Activated CD4-positive, alpha-beta T cell treated with anti-CD3 and anti-CD28 coated beads, Interleukin-2, amount 10 ng/mL, durations not matched to agents 24 days and 14 days (primary cell): ENCODE measurements at regions of chr18 and their contacts with region 1.

Region 1: DNA sequence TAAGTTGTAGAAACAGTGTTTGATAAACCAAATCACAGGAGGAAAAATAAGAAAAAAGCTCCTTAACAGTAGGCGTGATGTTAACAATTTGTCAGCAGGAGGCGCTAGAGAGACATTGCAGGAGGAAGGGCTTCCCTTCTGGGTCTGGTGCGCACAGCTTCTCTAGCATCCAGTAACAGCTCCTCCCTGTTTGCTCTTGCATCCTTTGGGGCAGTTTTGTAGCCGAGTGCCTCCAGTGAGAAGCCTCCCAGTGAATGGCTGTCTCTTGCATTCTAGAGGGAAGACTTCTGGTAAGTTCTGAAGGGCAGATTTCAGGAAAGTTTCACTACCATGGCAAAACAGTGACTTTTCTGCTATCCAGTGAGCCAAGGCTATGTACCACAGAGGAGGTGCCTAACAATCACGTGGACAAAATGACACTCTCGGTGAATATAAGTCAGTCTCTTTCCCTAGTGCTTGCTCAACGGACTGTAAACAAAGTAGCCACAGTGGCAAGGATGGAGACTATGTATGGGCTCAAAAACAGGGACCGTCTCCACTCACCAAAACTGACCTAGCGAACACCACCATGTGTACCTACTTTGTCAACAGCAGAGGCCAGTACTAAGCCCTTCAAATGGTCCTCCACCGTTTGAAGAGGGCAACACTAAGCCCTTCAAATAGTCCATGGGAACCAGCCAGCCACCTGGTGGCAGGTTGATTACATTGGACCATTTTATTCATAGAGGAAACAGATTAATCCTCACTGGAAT is 9.6 kb upstream of the ZNF396 start:
- DNase-seq: peak; percentile 89
- H3K4me3 Mint-ChIP-seq: no peak overlapping the region
- H3K27ac Mint-ChIP-seq: no peak overlapping the region
- H3K4me1 Mint-ChIP-seq: peaks cover 5% of the 10 kb centered on the region
- H3K27me3 Mint-ChIP-seq: peaks cover 33% of the 10 kb centered on the region

Region 2: DNA sequence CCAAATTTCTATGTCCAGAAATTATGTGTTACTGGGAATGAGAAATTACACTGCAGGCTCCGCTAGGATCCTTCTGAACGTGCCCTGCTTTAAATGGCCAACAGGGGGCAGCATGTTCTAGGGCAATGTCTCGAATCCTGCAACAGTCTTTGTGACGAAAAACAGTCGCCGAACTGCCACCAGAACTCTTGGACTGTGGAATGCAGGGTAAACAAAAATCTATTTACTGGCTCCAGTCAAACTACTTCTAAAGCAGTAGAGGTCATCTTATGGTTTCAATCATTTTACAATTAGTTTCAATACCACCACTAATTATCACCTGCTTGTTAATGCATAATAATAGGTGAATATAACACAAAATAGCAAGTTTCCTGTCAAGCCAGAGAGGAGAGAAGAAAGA is 155.7 kb before region 1 on chr18:
- intact Hi-C with region 1: loop called (anchors 1 kb)
- DNase-seq: peak; percentile 93
- H3K4me3 Mint-ChIP-seq: peak overlapping the region; percentile 67
- H3K27ac Mint-ChIP-seq: no peak overlapping the region
- H3K4me1 Mint-ChIP-seq: peaks cover 3% of the 10 kb centered on the region
- H3K27me3 Mint-ChIP-seq: peaks cover 3% of the 10 kb centered on the region

Region 3: DNA sequence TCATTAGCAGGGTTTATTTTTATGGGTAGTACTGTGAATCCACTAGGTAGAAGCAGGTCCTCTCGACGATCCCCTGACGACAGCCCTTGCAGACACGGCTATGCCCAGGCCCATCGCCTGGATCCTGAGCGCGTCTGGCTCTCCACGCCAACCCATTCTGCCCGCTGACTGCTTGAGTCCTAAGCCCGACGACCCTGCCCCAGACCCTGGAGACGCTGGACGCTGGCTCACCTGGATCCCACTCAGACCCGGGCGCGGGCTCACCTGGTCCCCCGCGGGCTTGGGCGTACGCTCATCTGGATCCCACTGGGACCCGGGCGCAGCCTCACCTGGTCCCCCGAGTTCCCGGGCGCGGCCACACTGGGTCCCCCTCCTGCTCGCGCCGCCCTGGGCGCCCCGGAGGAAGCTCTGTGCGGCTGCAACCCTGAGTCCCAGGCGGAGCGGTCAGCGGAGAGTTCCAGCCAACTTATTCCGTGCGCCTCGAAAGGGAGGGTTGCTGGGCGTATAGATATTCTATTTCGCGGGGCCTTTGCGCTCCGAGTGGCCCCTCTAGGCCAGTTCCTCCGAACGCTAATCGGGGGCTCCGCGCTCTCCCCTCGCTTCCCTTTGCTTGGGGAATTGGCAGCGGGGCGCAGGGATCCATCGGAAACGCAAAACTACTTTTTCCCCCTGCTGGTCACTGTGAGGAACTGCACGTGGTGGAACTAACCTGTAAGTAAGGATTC is 563.3 kb after region 1 on chr18:
- intact Hi-C with region 1: loop called (anchors 10 kb)
- DNase-seq: peak; percentile 88
- H3K4me3 Mint-ChIP-seq: peak overlapping the region; percentile 86
- H3K27ac Mint-ChIP-seq: no peak overlapping the region
- H3K4me1 Mint-ChIP-seq: peaks cover 4% of the 10 kb centered on the region
- H3K27me3 Mint-ChIP-seq: peaks cover 18% of the 10 kb centered on the region

Region 4: GRCh38 chr18:36284671-36285295 is 898.0 kb after region 1 on chr18:
- intact Hi-C with region 1: loop called (anchors 10 kb)
- DNase-seq: peak; percentile 83
- H3K4me3 Mint-ChIP-seq: no peak overlapping the region
- H3K27ac Mint-ChIP-seq: no peak overlapping the region
- H3K4me1 Mint-ChIP-seq: peaks cover 3% of the 10 kb centered on the region
- H3K27me3 Mint-ChIP-seq: peaks cover 27% of the 10 kb centered on the region